Sigmoid colon (tissue), 7 donors: ENCODE measurements at regions of chr7 and their contacts with region 1.

Region 1: GRCh38 chr7:80918909-80919662 is at the start of gene SEMA3C:
- DNase-seq: peak; percentile 96
- H3K4me3 ChIP-seq: peak within 1 kb of the TSS; percentile 46 to 70 (median 64)
- H3K27ac ChIP-seq: peak within 1 kb of the TSS; percentile 80 to 91 (median 84)
- H3K4me1 ChIP-seq: peaks cover 0 to 41% (median 27%) of the 10 kb centered on the region in 4 donors
- H3K27me3 ChIP-seq: no peaks in the 10 kb centered on the region
- CTCF ChIP-seq: no peak
- EP300 ChIP-seq: peak in 1 of 4 donors; percentile 19
- POLR2A ChIP-seq: peak; percentile 64 to 65
- total RNA-seq, gene SEMA3C: 213 to 298 (median 250) TPM

Region 2: GRCh38 chr7:80699045-80699638 is 219.9 kb before region 1 on chr7:
- intact Hi-C with region 1: loop called (anchors 5 kb)
- DNase-seq: no peak
- H3K4me3 ChIP-seq: no peak overlapping the region
- H3K27ac ChIP-seq: peak overlapping the region in 3 of 4 donors; percentile 29 to 51 (median 40)
- H3K4me1 ChIP-seq: peaks cover 0 to 16% (median 14%) of the 10 kb centered on the region in 4 donors
- H3K27me3 ChIP-seq: no peaks in the 10 kb centered on the region
- CTCF ChIP-seq: peak; percentile 46 to 73 (median 64)
- EP300 ChIP-seq: no peak
- POLR2A ChIP-seq: no peak

Region 3: DNA sequence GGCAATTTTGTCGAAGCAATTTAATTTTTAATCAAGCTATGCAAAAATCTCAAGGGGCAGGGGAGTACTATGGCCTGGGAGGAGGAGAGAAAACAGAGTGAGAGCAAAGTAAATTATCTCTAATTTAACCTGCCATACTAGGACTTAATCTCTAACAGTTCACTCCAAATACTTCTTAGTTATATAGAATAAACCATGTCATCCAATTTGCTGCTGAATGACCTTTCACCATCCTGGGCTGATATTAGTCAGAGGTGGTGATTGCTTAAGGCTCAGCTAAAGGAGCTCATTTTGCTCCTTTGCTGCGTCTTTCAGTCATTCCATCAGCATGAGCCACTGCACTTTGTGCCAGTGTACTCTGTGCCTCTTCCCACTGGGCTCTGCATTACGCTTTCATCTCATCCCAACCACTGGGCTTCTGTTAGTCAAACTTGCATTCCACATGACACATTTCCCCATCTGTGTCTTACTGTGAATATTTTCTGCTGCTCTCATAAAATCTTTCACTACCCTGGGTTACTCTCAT is 196.4 kb before region 1 on chr7:
- intact Hi-C with region 1: loop called (anchors 5 kb)
- DNase-seq: peak; percentile 89
- H3K4me3 ChIP-seq: no peak overlapping the region
- H3K27ac ChIP-seq: peak overlapping the region; percentile 66 to 83 (median 78)
- H3K4me1 ChIP-seq: peaks cover 0 to 41% (median 36%) of the 10 kb centered on the region in 4 donors
- H3K27me3 ChIP-seq: no peaks in the 10 kb centered on the region
- CTCF ChIP-seq: no peak
- EP300 ChIP-seq: peak in 1 of 4 donors; percentile 21
- POLR2A ChIP-seq: no peak

Region 4: DNA sequence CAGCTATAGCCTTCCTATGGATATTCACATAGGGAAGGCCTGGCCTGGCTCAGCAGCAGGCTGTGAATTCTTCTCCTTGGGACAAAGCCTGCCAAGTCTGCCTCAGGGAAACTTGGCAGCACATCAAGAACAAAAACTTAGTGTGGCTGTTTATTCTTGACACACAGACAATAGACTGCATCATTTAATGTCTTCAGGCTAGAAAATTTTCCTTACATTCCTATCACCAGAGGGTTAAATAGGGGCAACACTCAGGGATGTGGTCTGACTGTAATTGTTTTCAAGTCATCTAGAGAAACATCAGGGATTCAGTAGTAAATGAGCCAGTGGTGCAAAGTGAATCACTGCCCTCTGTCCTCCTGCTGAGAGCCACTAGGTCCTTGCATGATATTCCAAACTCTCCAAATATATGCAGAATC is 137.5 kb before region 1 on chr7:
- intact Hi-C with region 1: loop called (anchors 5 kb)
- DNase-seq: peak; percentile 87
- H3K4me3 ChIP-seq: no peak overlapping the region
- H3K27ac ChIP-seq: peak overlapping the region; percentile 69 to 90 (median 80)
- H3K4me1 ChIP-seq: peaks cover 0 to 86% (median 73%) of the 10 kb centered on the region in 4 donors
- H3K27me3 ChIP-seq: no peaks in the 10 kb centered on the region
- CTCF ChIP-seq: peak in 1 of 4 experiments; percentile 26
- EP300 ChIP-seq: peak in 3 of 4 donors; percentile 66 to 79 (median 67)
- POLR2A ChIP-seq: no peak

Region 5: DNA sequence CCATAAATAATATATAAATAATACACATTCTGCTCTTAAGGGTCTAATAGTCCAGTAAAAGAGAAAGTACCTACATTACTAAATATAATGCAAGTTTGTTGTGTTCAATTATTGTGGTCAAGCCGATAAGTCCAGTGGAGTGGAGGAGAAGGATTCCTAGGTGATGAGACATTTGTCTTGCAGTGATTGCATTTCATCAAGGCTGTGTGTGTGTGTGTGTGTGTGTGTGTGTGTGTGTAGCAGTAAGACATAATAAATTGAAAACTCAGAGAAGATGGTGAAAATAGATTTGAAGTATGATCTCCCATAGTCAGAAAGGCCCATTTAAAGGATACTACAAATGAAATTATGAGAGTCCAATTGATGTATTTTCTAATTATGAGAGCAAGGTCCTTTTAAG is 192.3 kb after region 1 on chr7:
- intact Hi-C with region 1: loop called (anchors 5 kb)
- DNase-seq: no peak
- H3K4me3 ChIP-seq: no peak overlapping the region
- H3K27ac ChIP-seq: peak overlapping the region in 3 of 4 donors; percentile 60 to 74 (median 74)
- H3K4me1 ChIP-seq: peaks cover 0 to 54% (median 26%) of the 10 kb centered on the region in 4 donors
- H3K27me3 ChIP-seq: no peaks in the 10 kb centered on the region
- CTCF ChIP-seq: no peak
- EP300 ChIP-seq: no peak
- POLR2A ChIP-seq: no peak

Region 6: GRCh38 chr7:81447351-81447952 is 528.4 kb after region 1 on chr7:
- intact Hi-C with region 1: loop called (anchors 5 kb)
- DNase-seq: no peak
- H3K4me3 ChIP-seq: no peak overlapping the region
- H3K27ac ChIP-seq: no peak overlapping the region
- H3K4me1 ChIP-seq: no peaks in the 10 kb centered on the region
- H3K27me3 ChIP-seq: no peaks in the 10 kb centered on the region
- CTCF ChIP-seq: peak; percentile 31 to 58 (median 50)
- EP300 ChIP-seq: no peak
- POLR2A ChIP-seq: no peak